Activated CD4-positive, alpha-beta memory T cell treated with anti-CD3 and anti-CD28 coated beads for 36 hours (primary cell): ENCODE measurements at regions of chr17 and their contacts with region 1.

Region 1: GRCh38 chr17:64129764-64130558 is at the start of gene ERN1:
- DNase-seq: peak; percentile 94
- H3K4me3 Mint-ChIP-seq: peak within 1 kb of the TSS; percentile 90
- H3K27ac Mint-ChIP-seq: peak within 1 kb of the TSS; percentile 93
- H3K4me1 Mint-ChIP-seq: peaks cover 56% of the 10 kb centered on the region
- H3K27me3 Mint-ChIP-seq: no peaks in the 10 kb centered on the region
- total RNA-seq, gene ERN1: 45.3 to 47.7 TPM

Region 2: DNA sequence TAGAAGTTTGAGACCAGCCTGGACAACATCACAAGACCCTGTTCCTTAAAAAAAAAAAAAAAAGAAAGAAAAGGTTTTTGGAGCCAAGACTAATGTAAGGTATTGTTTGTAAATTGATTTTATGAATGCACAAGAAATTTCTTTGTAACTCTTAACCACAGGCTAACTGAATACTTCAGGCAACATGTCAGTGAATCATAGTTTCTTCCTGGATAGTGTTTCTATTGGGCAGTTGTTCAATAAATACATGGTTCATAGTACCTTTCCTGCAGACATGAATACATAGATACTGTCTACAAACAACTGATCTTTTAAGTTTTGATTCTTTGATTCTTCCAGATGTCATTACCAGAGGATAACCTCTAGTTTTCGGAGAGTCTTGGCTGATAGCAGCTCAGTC is 344.4 kb before region 1 on chr17:
- CTCF ChIA-PET with region 1: no interaction called
- POLR2A ChIA-PET with region 1: no interaction called
- intact Hi-C with region 1: no loop called
- DNase-seq: no peak
- H3K4me3 Mint-ChIP-seq: no peak overlapping the region
- H3K27ac Mint-ChIP-seq: no peak overlapping the region
- H3K4me1 Mint-ChIP-seq: peaks cover 33% of the 10 kb centered on the region
- H3K27me3 Mint-ChIP-seq: no peaks in the 10 kb centered on the region

Region 3: GRCh38 chr17:63931099-63931561 is 198.8 kb before region 1 on chr17:
- CTCF ChIA-PET with region 1: interaction called, 10 read pairs
- POLR2A ChIA-PET with region 1: no interaction called
- intact Hi-C with region 1: no loop called
- DNase-seq: peak; percentile 77
- H3K4me3 Mint-ChIP-seq: peak overlapping the region; percentile 95
- H3K27ac Mint-ChIP-seq: peak overlapping the region; percentile 91
- H3K4me1 Mint-ChIP-seq: peaks cover 17% of the 10 kb centered on the region
- H3K27me3 Mint-ChIP-seq: no peaks in the 10 kb centered on the region

Region 4: GRCh38 chr17:64025732-64026294 is 104.1 kb before region 1 on chr17:
- CTCF ChIA-PET with region 1: interaction called, 583 read pairs
- POLR2A ChIA-PET with region 1: interaction called, 85 read pairs
- intact Hi-C with region 1: loop called (anchors 1 kb)
- DNase-seq: peak; percentile 95
- H3K4me3 Mint-ChIP-seq: peak overlapping the region; percentile 81
- H3K27ac Mint-ChIP-seq: peak overlapping the region; percentile 98
- H3K4me1 Mint-ChIP-seq: peaks cover 67% of the 10 kb centered on the region
- H3K27me3 Mint-ChIP-seq: no peaks in the 10 kb centered on the region

Region 5: GRCh38 chr17:64063766-64064224 is 66.2 kb before region 1 on chr17:
- CTCF ChIA-PET with region 1: interaction called, 193 read pairs
- POLR2A ChIA-PET with region 1: interaction called, 56 read pairs
- intact Hi-C with region 1: loop called (anchors 1 kb)
- DNase-seq: peak; percentile 74
- H3K4me3 Mint-ChIP-seq: peak overlapping the region; percentile 64
- H3K27ac Mint-ChIP-seq: peak overlapping the region; percentile 93
- H3K4me1 Mint-ChIP-seq: peaks cover 88% of the 10 kb centered on the region
- H3K27me3 Mint-ChIP-seq: no peaks in the 10 kb centered on the region

Region 6: GRCh38 chr17:64145757-64146417 is 15.9 kb after region 1 on chr17:
- CTCF ChIA-PET with region 1: interaction called, 60 read pairs
- POLR2A ChIA-PET with region 1: interaction called, 65 read pairs
- intact Hi-C with region 1: loop called (anchors 1 kb)
- DNase-seq: peak; percentile 96
- H3K4me3 Mint-ChIP-seq: no peak overlapping the region
- H3K27ac Mint-ChIP-seq: no peak overlapping the region
- H3K4me1 Mint-ChIP-seq: peaks cover 23% of the 10 kb centered on the region
- H3K27me3 Mint-ChIP-seq: no peaks in the 10 kb centered on the region

Region 7: GRCh38 chr17:64160378-64160777 is 30.4 kb after region 1 on chr17:
- CTCF ChIA-PET with region 1: no interaction called
- POLR2A ChIA-PET with region 1: no interaction called
- intact Hi-C with region 1: no loop called
- DNase-seq: no peak
- H3K4me3 Mint-ChIP-seq: no peak overlapping the region
- H3K27ac Mint-ChIP-seq: no peak overlapping the region
- H3K4me1 Mint-ChIP-seq: peaks cover 2% of the 10 kb centered on the region
- H3K27me3 Mint-ChIP-seq: no peaks in the 10 kb centered on the region

Region 8: DNA sequence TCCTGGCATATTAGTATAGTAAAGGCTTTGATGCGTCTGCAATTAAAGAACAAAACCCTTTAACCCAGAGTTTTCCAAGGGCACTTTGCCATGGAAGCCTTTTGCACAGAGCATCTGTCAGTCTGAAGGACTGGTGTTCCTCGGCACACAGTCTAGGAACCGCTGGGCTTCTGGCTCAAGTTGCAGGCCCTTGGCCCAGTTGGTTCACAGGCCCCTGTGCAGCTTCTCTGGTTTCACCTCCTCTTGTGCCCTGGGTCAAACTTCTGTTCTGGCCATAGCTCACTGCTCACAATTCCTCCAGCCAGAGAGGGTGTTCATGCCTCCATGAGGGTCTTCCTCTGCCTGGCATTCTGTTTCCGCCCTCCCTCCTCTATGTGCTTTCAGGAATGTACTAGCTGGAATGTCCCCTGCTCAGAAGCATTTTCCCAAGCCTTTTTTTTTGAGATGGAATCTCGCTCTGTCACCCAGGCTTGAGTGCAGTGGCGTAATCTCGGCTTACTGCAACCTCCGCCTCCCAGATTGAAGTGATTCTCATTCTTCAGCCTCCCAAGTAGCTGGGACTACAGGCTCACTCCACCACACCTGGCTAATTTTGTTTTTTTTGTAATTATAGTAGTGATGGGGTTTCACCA is 167.6 kb after region 1 on chr17:
- CTCF ChIA-PET with region 1: no interaction called
- POLR2A ChIA-PET with region 1: no interaction called
- intact Hi-C with region 1: no loop called
- DNase-seq: no peak
- H3K4me3 Mint-ChIP-seq: no peak overlapping the region
- H3K27ac Mint-ChIP-seq: no peak overlapping the region
- H3K4me1 Mint-ChIP-seq: no peaks in the 10 kb centered on the region
- H3K27me3 Mint-ChIP-seq: no peaks in the 10 kb centered on the region